Activated CD4-positive, alpha-beta T cell treated with anti-CD3 and anti-CD28 coated beads, Interleukin-2, amount 10 ng/mL, durations not matched to agents 24 days and 14 days (primary cell): ENCODE measurements at regions of chr2 and their contacts with region 1.

Region 1: GRCh38 chr2:3303583-3304406 is 73.8 kb downstream of the EIPR1 start:
- DNase-seq: peak; percentile 93
- H3K4me3 Mint-ChIP-seq: peak overlapping the region; percentile 34
- H3K27ac Mint-ChIP-seq: peak overlapping the region; percentile 49
- H3K4me1 Mint-ChIP-seq: peaks cover 7% of the 10 kb centered on the region
- H3K27me3 Mint-ChIP-seq: no peaks in the 10 kb centered on the region

Region 2: DNA sequence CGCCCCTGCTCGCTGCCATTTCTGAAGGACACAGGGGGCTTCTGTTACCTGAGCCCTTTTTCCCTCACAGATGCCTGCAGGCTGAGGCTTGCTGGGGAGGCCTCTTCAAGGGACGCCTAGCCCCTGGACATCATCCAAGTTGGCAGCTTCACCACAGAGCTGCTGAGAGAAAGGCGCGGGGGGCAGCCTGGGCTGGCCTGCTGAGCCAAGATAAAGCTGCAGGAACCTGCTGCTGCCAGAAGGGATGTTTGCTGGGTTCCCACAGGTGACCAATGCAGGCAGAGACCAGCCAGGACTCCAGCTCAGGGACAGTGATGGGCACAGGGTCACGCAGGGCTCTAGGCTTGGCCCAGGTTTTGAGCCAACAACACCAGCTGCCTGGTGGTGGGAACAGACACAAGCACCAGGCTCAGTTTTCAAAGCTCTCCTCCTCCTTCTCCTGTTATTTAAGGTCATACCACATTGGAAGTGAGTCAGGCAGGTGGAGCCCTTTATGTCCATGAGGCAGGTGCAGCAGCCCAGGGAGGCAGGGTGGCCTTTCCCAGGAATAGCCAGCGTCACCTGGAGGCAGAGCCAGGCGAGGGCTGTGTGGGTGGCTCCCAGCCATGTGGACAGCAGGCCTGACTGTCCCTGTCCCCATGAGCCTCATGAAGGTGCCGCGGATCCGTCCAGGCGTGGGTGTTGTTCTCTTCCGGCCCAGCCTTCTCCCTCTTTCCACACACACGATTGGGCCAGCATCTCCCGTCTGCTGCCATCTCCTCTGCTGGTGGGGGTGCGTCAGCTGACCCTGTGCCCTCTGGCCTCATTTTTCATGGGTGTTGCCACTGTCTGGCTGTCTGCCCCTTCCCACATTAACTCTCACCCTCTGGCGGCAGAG is 457.2 kb before region 1 on chr2:
- intact Hi-C with region 1: loop called (anchors 10 kb)
- DNase-seq: no peak
- H3K4me3 Mint-ChIP-seq: no peak overlapping the region
- H3K27ac Mint-ChIP-seq: no peak overlapping the region
- H3K4me1 Mint-ChIP-seq: no peaks in the 10 kb centered on the region
- H3K27me3 Mint-ChIP-seq: no peaks in the 10 kb centered on the region

Region 3: GRCh38 chr2:3121601-3122000 is 182.2 kb before region 1 on chr2:
- intact Hi-C with region 1: loop called (anchors 5 kb)
- DNase-seq: no peak
- H3K4me3 Mint-ChIP-seq: no peak overlapping the region
- H3K27ac Mint-ChIP-seq: no peak overlapping the region
- H3K4me1 Mint-ChIP-seq: peaks cover 3% of the 10 kb centered on the region
- H3K27me3 Mint-ChIP-seq: no peaks in the 10 kb centered on the region

Region 4: GRCh38 chr2:3179208-3179607 is 124.6 kb before region 1 on chr2:
- intact Hi-C with region 1: loop called (anchors 1 kb)
- DNase-seq: peak; percentile 62
- H3K4me3 Mint-ChIP-seq: no peak overlapping the region
- H3K27ac Mint-ChIP-seq: no peak overlapping the region
- H3K4me1 Mint-ChIP-seq: peaks cover 3% of the 10 kb centered on the region
- H3K27me3 Mint-ChIP-seq: no peaks in the 10 kb centered on the region

Region 5: DNA sequence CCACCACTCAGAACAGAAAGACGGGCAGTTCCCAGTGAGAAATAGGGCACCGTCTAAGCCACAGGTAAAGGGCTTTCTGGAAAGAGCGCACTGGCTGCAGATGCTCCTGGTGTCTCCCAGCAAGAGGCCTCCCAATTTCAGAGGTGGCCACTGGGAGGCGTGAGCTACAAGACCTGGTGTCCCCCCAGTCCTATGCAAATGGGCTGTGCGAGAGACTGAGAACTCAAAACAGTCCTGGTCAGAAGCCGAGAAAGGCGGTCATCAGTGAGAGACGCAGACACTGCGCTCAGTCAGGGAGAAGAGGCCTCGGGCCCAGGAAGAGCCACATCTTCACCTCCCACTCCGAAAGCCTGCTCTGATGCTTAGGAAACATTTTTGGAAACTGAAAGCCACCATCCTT is 105.7 kb before region 1 on chr2:
- intact Hi-C with region 1: loop called (anchors 5 kb)
- DNase-seq: no peak
- H3K4me3 Mint-ChIP-seq: no peak overlapping the region
- H3K27ac Mint-ChIP-seq: no peak overlapping the region
- H3K4me1 Mint-ChIP-seq: peaks cover 3% of the 10 kb centered on the region
- H3K27me3 Mint-ChIP-seq: no peaks in the 10 kb centered on the region

Region 6: GRCh38 chr2:3223080-3223923 is 80.5 kb before region 1 on chr2:
- intact Hi-C with region 1: loop called (anchors 1 kb)
- DNase-seq: peak; percentile 91
- H3K4me3 Mint-ChIP-seq: peak overlapping the region; percentile 52
- H3K27ac Mint-ChIP-seq: peak overlapping the region; percentile 94
- H3K4me1 Mint-ChIP-seq: peaks cover 42% of the 10 kb centered on the region
- H3K27me3 Mint-ChIP-seq: no peaks in the 10 kb centered on the region

Region 7: DNA sequence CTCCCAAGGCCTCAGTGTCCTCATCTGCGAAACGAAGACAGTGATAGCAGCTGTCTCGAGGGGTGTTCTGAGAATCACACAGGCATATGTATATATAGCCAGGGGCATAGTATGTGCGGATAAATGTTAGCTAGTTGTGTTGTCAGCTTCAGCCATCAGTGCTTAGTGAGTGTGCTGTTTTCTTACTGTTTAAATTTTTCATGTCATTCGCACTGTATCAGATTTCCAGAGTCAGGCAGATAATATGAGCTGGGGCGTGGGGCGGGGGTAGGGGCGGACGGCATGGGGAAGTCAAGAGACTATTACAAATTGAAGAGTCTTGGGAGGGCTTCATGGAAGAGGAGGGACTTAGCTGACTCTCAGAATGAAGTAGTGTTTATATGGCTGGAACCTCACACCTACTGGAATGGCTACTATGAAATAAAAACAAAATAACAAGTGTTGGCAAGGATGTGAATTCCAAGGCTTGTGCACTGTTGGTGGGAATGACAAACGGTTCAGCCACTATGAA is 82.7 kb after region 1 on chr2:
- intact Hi-C with region 1: no loop called
- DNase-seq: no peak
- H3K4me3 Mint-ChIP-seq: no peak overlapping the region
- H3K27ac Mint-ChIP-seq: no peak overlapping the region
- H3K4me1 Mint-ChIP-seq: peaks cover 8% of the 10 kb centered on the region
- H3K27me3 Mint-ChIP-seq: no peaks in the 10 kb centered on the region